Activated naive CD4-positive, alpha-beta T cell treated with anti-CD3 and anti-CD28 coated beads for 36 hours (primary cell): ENCODE measurements at regions of chr2 and their contacts with region 1.

Region 1: GRCh38 chr2:131154071-131154531 is 49.0 kb downstream of the PLEKHB2 start:
- DNase-seq: peak; percentile 93
- H3K4me3 Mint-ChIP-seq: no peak overlapping the region
- H3K27ac Mint-ChIP-seq: no peak overlapping the region
- H3K4me1 Mint-ChIP-seq: peaks cover 22% of the 10 kb centered on the region
- H3K27me3 Mint-ChIP-seq: no peaks in the 10 kb centered on the region

Region 2: DNA sequence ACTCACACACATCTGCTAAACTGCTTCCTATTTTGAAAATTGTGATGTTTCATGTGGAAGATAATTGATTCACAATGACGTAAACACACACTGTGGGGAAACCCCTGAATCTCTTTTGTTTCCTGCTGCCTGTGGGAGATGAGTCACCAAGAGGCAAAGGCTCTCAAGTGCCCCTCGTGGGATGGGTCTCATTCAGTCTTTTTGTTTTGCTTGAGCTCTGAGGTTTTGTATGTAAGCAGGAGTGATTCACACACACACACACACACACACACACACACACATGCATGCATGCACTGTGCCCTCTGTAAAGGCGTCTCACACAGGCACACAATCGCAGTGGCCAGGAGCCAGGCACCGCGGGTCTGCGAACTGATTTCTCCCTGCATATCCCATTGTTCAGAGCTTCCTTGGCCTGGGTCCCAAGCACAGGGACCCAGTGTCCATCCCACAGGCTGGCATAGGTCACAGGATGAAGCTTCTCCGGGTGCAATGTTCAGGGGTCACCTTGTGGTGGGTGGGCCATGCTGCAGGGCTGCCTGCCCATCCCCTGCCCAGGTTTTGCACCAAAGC is 329.5 kb before region 1 on chr2:
- CTCF ChIA-PET with region 1: no interaction called
- intact Hi-C with region 1: loop called (anchors 1 kb)
- DNase-seq: peak; percentile 84
- H3K4me3 Mint-ChIP-seq: no peak overlapping the region
- H3K27ac Mint-ChIP-seq: peak overlapping the region; percentile 86
- H3K4me1 Mint-ChIP-seq: peaks cover 19% of the 10 kb centered on the region
- H3K27me3 Mint-ChIP-seq: peaks cover 4% of the 10 kb centered on the region

Region 3: DNA sequence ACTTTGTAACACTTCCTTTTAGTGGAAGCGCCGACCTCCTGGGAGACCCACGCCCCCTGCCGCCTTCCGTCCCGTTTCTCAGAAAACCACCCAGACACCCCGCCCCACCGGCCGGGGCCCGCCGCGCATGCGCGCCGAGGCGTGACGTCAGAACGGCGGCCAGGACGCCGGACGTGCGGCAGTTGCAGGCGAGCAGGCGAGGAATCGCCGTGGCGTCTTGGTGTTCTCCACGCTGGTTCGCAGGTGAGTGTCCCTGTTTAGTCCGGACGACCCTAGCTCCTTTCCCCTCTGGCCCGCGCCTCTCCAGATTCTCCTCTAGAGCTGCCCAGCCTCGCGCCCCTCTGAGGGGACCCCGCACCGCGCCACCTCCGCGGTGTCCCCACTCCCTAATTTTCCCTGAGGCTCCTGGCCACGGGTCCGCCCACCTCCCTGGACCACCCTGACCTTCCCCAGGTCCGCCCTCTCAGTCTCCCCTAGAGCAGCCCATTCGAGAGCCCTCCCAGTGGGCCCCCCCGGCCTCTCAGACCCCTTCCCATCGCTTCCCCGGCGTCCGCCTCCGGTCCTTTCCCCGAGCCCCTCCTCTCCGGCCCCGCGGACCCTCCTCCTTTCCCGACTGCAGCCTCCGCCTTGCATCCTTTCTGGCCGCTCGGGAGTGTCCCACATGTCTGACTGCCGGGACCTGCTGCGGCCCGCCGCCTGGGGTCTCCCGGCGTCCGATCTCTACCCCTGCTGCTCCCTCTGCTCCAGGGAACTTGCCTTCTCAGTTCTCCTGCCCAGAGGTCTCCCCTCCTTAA is 48.7 kb before region 1 on chr2 and contains the start of gene PLEKHB2:
- CTCF ChIA-PET with region 1: no interaction called
- intact Hi-C with region 1: loop called (anchors 1 kb)
- DNase-seq: peak; percentile 92
- H3K4me3 Mint-ChIP-seq: peak within 1 kb of the TSS; percentile 93
- H3K27ac Mint-ChIP-seq: peak within 1 kb of the TSS; percentile 98
- H3K4me1 Mint-ChIP-seq: peaks cover 40% of the 10 kb centered on the region
- H3K27me3 Mint-ChIP-seq: no peaks in the 10 kb centered on the region
- total RNA-seq, gene PLEKHB2: 43.4 to 43.9 TPM

Region 4: DNA sequence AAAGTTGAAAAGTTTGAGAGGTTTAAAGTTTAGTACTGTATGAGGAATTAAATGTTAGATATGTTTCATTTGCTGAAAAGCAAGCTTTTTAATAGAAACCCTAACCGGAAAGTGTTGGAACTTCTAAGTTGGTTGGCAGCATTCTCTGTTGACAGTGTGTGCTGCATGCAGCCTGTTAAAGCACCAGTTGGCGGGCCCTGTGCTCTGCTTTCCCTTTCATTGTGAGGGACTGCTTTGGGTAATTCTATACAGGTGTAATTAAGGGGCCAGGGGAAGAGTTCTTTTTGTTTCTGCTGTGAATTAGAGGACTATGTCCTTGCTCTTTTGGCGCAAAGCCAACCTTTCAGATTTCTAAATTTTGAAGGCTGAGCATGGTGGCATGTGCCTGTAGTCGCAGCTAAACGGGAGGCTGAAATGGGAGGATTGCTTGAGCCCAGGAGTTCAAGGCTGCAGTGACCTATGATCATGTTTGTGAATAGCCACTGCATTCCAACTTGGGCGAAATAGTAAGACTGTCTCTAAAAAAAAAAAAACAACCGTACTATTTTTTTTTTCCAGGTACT is 28.8 kb before region 1 on chr2:
- CTCF ChIA-PET with region 1: no interaction called
- intact Hi-C with region 1: no loop called
- DNase-seq: no peak
- H3K4me3 Mint-ChIP-seq: no peak overlapping the region
- H3K27ac Mint-ChIP-seq: no peak overlapping the region
- H3K4me1 Mint-ChIP-seq: peaks cover 7% of the 10 kb centered on the region
- H3K27me3 Mint-ChIP-seq: no peaks in the 10 kb centered on the region

Region 5: DNA sequence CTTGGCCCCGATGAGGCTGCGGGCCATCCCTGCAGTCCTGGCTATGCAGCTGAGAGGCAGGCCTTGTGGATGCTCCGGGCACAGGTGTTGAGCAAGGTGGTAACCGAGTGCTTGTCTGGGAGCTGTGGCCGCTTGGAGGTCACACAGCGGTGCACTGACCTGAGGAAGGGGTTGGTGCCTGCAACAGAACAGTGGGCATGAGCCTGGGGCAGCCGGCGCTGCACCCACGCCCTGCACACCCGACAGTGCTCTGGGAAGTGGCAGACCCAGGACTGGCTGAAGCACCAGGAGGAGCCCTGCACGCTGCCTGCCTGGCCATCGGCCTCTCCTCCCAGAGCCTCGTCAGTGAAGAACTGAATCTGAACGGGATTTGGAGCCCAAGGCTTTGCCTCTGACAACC is 47.0 kb after region 1 on chr2:
- CTCF ChIA-PET with region 1: no interaction called
- intact Hi-C with region 1: no loop called
- DNase-seq: no peak
- H3K4me3 Mint-ChIP-seq: no peak overlapping the region
- H3K27ac Mint-ChIP-seq: no peak overlapping the region
- H3K4me1 Mint-ChIP-seq: no peaks in the 10 kb centered on the region
- H3K27me3 Mint-ChIP-seq: peaks cover 2% of the 10 kb centered on the region

Region 6: DNA sequence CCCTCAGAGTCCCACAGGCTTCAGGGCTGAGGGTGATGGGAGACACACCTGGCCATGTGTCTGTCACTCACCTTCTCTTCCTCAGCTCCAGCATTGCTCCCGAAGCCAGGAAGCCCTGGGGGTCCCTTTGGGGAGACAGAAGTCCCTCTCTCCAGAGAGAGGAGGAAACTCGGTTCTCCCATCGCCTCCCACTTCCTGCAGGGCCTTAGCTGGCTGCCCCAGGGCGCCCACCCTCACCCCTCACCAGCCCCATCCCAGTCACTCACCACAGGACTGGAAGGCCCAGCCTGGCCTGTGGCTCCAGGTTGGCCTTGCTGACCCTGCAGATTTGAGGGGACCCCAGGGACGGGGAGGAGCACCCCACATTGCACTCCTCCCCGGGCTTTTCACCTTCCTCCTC is 212.5 kb after region 1 on chr2:
- CTCF ChIA-PET with region 1: no interaction called
- intact Hi-C with region 1: no loop called
- DNase-seq: no peak
- H3K4me3 Mint-ChIP-seq: no peak overlapping the region
- H3K27ac Mint-ChIP-seq: no peak overlapping the region
- H3K4me1 Mint-ChIP-seq: peaks cover 6% of the 10 kb centered on the region
- H3K27me3 Mint-ChIP-seq: peaks cover 29% of the 10 kb centered on the region

Region 7: GRCh38 chr2:131521961-131522794 is 368.1 kb after region 1 on chr2:
- CTCF ChIA-PET with region 1: no interaction called
- intact Hi-C with region 1: loop called (anchors 1 kb)
- DNase-seq: no peak
- H3K4me3 Mint-ChIP-seq: no peak overlapping the region
- H3K27ac Mint-ChIP-seq: no peak overlapping the region
- H3K4me1 Mint-ChIP-seq: no peaks in the 10 kb centered on the region
- H3K27me3 Mint-ChIP-seq: no peaks in the 10 kb centered on the region

Region 8: GRCh38 chr2:131673392-131674173 is 519.5 kb after region 1 on chr2:
- CTCF ChIA-PET with region 1: interaction called, 12 read pairs
- intact Hi-C with region 1: loop called (anchors 1 kb)
- DNase-seq: peak; percentile 77
- H3K4me3 Mint-ChIP-seq: peak overlapping the region; percentile 24
- H3K27ac Mint-ChIP-seq: no peak overlapping the region
- H3K4me1 Mint-ChIP-seq: peaks cover 3% of the 10 kb centered on the region
- H3K27me3 Mint-ChIP-seq: peaks cover 13% of the 10 kb centered on the region

Region 9: DNA sequence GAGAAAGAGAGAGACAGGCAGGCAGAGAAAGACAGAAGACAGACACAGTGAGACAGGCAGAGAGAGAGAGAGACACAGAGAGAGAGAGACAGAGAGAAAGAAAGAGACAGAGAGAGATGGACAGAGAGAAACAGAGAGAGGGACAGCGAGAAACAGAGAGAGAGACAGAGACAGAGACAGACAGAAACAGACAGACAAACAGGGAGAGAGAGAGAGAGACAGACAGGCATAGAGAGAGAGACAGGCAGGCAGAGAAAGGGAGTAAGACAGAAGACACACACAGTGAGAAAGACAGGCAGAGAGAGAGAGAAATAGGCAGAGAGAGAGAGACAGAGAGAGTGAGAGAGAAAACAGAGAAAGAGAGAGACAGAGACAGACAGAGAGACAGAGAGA is 1113.0 kb after region 1 on chr2:
- CTCF ChIA-PET with region 1: no interaction called
- intact Hi-C with region 1: loop called (anchors 10 kb)
- DNase-seq: no peak
- H3K4me3 Mint-ChIP-seq: no peak overlapping the region
- H3K27ac Mint-ChIP-seq: no peak overlapping the region
- H3K4me1 Mint-ChIP-seq: peaks cover 3% of the 10 kb centered on the region
- H3K27me3 Mint-ChIP-seq: peaks cover 9% of the 10 kb centered on the region